Left colon (tissue), 2 donors: ENCODE measurements at regions of chr15 and their contacts with region 1.

Region 1: GRCh38 chr15:92917606-92918407 is 17.7 kb downstream of the CHD2 start:
- DNase-seq: peak; percentile 93 to 98
- ATAC-seq: peak; percentile 62

Region 2: GRCh38 chr15:92803847-92804609 is 113.8 kb before region 1 on chr15:
- intact Hi-C with region 1: loop called (anchors 5 to 10 kb)
- DNase-seq: peak; percentile 52 to 81
- ATAC-seq: peak; percentile 51

Region 3: DNA sequence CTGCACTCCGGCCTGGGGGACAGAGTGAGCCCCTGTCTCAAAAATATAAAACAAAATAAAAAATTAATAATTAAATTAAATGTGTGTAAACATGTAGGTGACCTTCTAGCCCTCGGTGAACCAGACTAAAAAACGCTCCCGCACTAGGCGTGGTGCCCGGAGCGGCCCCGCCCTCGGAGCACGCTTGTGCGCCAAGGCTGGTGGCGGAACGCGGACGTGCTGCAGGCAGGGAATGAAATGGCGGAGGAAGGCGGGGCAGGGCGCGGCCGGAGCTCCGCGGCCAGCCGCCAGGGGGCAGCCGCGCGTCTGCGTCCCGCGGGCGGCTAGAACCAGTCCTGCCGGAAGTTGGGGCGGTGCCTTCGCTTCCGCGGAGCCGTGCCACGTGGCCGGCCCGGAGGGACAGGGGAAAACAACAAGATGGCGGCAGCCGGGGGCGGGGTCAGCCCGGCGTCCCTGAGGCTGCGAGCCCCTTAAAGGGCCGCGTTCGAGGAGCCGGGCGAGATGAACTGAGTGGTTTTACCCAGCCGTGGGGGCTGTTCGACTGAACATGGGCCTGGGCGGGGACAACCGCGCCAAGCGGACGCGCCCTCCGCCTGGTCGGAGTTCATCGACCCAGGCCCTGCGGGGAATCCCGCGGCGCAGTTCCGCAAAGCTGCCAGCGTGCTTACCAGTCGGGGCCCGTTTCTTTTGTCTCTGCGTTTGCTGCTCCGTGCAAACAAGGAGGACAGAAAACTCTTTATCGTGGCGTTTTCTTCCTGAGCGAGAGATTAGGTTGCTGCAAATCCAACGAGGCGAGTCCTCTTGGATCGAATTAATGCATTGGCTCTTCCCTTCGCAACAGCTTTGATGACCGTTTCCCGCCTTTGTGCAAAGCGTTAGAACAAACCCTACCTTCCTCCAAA is 108.6 kb before region 1 on chr15:
- intact Hi-C with region 1: loop called (anchors 5 to 10 kb)
- DNase-seq: peak; percentile 98
- ATAC-seq: peak; percentile 77